H1 (cell line): ENCODE measurements at regions of chr17 and their contacts with region 1.

Region 1: GRCh38 chr17:62692721-62693483 is 65.4 kb downstream of the MRC2 start:
- DNase-seq: peak in 1 of 2 experiments; percentile 77
- H3K4me3 ChIP-seq: no peak overlapping the region
- H3K27ac ChIP-seq: no peak overlapping the region
- H3K4me1 ChIP-seq: peaks cover 0 to 5% (median 0%) of the 10 kb centered on the region in 4 experiments; a peak in 3 of 7 replicates
- H3K27me3 ChIP-seq: no peaks in the 10 kb centered on the region
- CTCF ChIP-seq: peak; percentile 64 to 77 (median 77)
- EP300 ChIP-seq: no peak
- POLR2A ChIP-seq: no peak
- RAD21 ChIP-seq: peak; percentile 58 to 76

Region 2: DNA sequence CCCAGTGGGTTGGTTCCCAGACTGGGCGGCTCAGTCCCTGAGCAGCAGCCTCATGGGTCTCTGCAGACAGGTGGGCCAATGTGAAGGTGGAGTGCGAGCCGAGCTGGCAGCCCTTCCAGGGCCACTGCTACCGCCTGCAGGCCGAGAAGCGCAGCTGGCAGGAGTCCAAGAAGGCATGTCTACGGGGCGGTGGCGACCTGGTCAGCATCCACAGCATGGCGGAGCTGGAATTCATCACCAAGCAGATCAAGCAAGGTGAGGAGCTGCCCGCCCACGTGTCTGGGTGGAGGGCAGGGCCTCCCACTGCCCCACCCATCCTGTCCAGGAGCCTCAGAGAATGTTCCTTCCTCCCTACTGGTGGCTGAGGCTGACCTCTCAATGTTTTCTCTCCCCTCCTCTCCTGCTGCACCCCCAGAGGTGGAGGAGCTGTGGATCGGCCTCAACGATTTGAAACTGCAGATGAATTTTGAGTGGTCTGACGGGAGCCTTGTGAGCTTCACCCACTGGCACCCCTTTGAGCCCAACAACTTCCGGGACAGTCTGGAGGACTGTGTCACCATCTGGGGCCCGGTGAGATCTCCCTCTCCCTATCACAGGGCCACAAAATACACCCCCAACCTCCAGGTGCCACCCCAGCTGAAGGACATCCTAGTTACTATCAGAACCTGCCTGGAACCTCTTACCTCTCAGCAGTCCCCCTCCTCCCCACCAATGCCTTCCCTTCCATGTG is 21.2 kb before region 1 on chr17:
- CTCF ChIA-PET with region 1: interaction called, 68 read pairs
- POLR2A ChIA-PET with region 1: no interaction called
- DNase-seq: no peak
- H3K4me3 ChIP-seq: no peak overlapping the region
- H3K27ac ChIP-seq: no peak overlapping the region
- H3K4me1 ChIP-seq: no peaks in the 10 kb centered on the region; a peak in 2 of 7 replicates
- H3K27me3 ChIP-seq: no peaks in the 10 kb centered on the region
- CTCF ChIP-seq: no peak
- EP300 ChIP-seq: no peak
- POLR2A ChIP-seq: no peak
- RAD21 ChIP-seq: peak in 1 of 2 experiments; percentile 21; a peak in 1 of 4 replicates

Region 3: GRCh38 chr17:62680541-62681052 is 12.3 kb before region 1 on chr17:
- CTCF ChIA-PET with region 1: interaction called, 68 read pairs
- POLR2A ChIA-PET with region 1: interaction called, 4 read pairs
- DNase-seq: no peak
- H3K4me3 ChIP-seq: no peak overlapping the region
- H3K27ac ChIP-seq: no peak overlapping the region
- H3K4me1 ChIP-seq: peaks cover 0 to 4% (median 0%) of the 10 kb centered on the region in 4 experiments; a peak in 2 of 7 replicates
- H3K27me3 ChIP-seq: no peaks in the 10 kb centered on the region
- CTCF ChIP-seq: no peak
- EP300 ChIP-seq: no peak
- POLR2A ChIP-seq: no peak
- RAD21 ChIP-seq: no peak; a peak in 1 of 4 replicates

Region 4: GRCh38 chr17:62703775-62704378 is 11.0 kb after region 1 on chr17:
- CTCF ChIA-PET with region 1: interaction called, 17 read pairs
- POLR2A ChIA-PET with region 1: interaction called, 4 read pairs
- DNase-seq: peak in 1 of 2 experiments; percentile 93
- H3K4me3 ChIP-seq: peak overlapping the region; percentile 42 to 74 (median 51)
- H3K27ac ChIP-seq: no peak overlapping the region
- H3K4me1 ChIP-seq: peaks cover 7 to 22% (median 13%) of the 10 kb centered on the region in 4 experiments
- H3K27me3 ChIP-seq: peaks cover 0 to 7% (median 1%) of the 10 kb centered on the region in 4 experiments; a peak in 4 of 7 replicates
- CTCF ChIP-seq: peak; percentile 75 to 90 (median 87)
- EP300 ChIP-seq: peak in 1 of 2 experiments; percentile 58; a peak in 1 of 3 replicates
- POLR2A ChIP-seq: no peak; a peak in 2 of 3 replicates
- RAD21 ChIP-seq: peak; percentile 91 to 97

Region 5: DNA sequence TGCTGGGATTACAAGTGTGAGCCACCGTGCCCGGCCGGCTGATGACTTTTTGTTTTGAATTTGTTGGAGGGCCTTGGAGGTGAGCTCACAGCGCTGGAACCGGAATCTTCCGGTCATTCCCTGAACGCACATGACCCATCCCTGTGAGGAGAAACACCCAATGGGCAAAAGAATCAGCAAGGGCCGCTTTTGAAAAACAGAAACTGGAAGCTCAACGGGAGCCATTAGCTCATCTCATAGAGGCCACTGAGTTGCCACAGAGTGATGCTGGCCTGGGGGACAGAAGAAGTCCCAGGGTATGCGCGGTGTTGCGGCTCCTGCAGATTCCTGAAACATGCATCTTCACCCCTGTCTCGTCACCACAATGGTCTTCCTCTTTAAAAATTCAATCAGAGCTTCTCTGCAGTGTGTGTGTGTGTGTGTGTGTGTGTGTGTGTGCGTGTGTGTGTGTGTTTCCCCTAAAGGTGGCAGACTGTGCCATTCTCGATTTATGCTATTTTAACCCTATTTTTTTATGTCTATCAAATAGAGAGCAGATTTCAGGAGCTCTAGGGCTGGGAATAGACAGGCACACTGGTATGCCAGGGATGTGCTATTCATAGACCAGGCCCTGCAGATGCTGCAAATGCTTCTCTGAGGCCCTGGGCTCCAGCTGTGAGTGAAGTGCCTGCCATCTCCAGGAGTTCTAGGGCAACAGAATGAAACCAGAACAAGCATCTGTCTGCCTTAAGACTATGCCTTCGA is 46.9 kb after region 1 on chr17:
- CTCF ChIA-PET with region 1: no interaction called
- POLR2A ChIA-PET with region 1: no interaction called
- DNase-seq: no peak
- H3K4me3 ChIP-seq: no peak overlapping the region
- H3K27ac ChIP-seq: no peak overlapping the region
- H3K4me1 ChIP-seq: peaks cover 5 to 14% (median 8%) of the 10 kb centered on the region in 4 experiments; a peak in 6 of 7 replicates
- H3K27me3 ChIP-seq: no peaks in the 10 kb centered on the region
- CTCF ChIP-seq: no peak
- EP300 ChIP-seq: no peak
- POLR2A ChIP-seq: no peak
- RAD21 ChIP-seq: no peak